ENCODE measurements at regions of chr7 and their contacts with region 1.

Region 1: DNA sequence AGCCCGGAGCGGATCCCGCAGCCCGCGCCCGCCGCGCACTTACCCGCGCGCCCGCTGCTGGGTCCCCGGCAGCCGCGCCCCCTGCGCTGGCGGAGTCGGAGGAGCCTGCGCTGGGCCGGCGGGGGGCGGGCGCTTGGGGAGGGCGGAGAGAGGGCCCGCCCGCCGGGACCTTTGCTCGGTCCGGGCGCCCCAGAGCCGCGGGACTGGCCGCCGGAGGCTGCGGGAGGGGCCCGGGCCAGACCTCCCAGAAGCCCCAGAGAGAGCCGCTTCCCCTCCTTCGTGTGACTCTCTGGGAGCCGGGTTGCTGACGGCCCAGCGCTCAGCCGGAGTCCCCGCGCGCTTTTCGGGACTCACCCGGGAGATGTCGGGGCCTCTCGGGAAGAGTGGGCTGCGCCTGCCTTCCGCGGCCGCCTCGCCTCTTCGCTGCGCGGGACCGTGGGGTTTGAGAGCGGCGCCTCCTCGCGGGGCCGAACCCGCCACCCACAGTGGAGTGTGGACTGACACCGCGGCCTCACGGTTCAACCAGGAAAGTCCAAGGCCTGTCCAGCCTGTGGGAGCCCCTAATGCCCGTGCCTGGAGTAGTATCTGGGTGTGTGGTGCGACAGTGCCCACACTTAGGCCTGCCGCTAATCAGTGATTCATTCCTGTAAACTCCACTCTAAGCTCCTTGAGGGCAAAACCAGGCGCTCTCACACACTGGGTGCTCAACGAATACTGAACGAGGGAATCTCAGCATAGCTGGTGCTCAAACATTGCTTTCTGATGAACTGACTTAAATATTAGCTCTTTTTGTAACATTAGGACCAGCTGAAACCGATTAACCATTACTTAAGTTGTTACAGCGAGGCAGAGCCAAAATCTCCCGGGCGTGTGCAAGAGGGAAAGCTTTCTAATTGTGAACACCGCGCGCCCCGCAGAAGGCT is at the start of gene GSDME:
- DNase-seq: no peak
- H3K4me3 ChIP-seq: peak within 1 kb of the TSS; percentile 69
- CTCF ChIP-seq: peak; percentile 2

Region 2: DNA sequence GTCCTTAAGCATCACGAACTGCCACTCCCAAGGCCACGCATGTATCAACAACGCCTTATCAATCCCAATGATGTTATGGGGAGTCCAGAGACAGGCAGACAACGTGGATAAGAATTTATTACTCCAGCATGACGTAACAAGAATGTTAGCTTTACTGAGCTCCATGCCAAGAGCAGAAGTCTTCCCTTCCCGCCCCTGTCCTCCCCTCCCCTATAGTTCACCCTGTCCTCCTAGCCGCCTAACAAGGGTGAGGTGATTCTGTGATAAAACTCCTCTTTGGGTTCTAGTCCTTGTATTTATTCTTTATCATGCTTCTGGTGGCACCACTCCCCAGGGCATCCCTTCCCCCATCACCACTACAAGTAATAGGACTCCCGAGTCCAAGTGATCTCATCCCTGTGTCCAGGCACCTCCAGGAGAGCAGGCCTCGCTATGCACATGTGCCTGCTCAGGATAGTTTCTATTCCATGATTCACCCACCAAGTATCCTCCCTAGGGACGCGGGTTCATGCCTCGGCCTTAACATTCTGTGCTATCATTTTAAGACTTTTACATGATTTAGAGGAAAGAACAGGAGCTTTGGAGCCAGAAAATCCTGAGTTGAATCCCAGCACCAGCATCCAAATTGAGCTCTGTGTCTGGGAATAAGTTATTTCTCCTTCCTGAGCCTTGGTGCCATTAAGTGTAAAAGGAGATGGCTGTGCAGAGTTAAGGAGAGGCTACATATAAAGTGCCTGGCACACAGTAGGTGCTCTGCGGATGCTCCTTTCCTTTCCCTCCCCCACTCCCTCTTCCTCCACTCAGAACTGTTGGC is 15.7 kb before region 1 on chr7:
- CTCF ChIA-PET with region 1: interaction called, 11 read pairs
- POLR2A ChIA-PET with region 1: interaction called, 3 read pairs
- DNase-seq: peak; percentile 89
- H3K4me3 ChIP-seq: no peak overlapping the region
- CTCF ChIP-seq: no peak

Region 3: GRCh38 chr7:25002786-25003185 is 245.2 kb after region 1 on chr7:
- CTCF ChIA-PET with region 1: no interaction called
- POLR2A ChIA-PET with region 1: no interaction called
- DNase-seq: no peak
- H3K4me3 ChIP-seq: no peak overlapping the region
- CTCF ChIP-seq: no peak

Measured in AG04449 (cell line).